ENCODE measurements at regions of chr1 and their contacts with region 1.

Region 1: GRCh38 chr1:18408656-18409370 is 71.9 kb upstream of the KLHDC7A start:
- DNase-seq: no peak
- ATAC-seq: no peak
- H3K4me3 ChIP-seq: no peak overlapping the region
- H3K27ac ChIP-seq: no peak overlapping the region
- H3K4me1 ChIP-seq: no peaks in the 10 kb centered on the region
- H3K27me3 ChIP-seq: peaks cover 0 to 5% of the 10 kb centered on the region in 2 experiments; a peak in 1 of 5 replicates
- CTCF ChIP-seq: no peak
- EP300 ChIP-seq: no peak
- POLR2A ChIP-seq: no peak
- RAD21 ChIP-seq: no peak

Region 2: DNA sequence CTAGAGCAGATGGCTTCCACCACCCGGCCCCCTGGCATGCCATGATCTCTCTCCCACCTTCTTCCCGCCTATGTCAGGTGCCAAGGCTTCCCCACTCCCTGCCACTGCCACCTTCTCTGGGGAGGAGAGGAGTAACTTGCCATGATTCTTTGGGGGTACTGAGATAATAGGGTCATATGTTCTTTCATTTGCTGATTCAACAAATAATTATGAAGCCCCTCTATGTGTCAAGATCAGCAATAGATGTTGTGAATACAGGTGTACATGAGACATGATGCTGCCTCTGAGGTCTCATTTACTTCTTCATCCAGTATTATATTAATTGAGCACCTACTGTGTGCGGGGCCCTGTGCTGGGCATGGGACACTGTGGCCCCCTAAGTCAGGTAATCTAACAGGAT is 1875.8 kb after region 1 on chr1:
- CTCF ChIA-PET with region 1: no interaction called
- POLR2A ChIA-PET with region 1: no interaction called
- in situ Hi-C with region 1: no loop called
- intact Hi-C with region 1: loop called (anchors 5 kb)
- DNase-seq: no peak
- ATAC-seq: no peak
- H3K4me3 ChIP-seq: no peak overlapping the region
- H3K27ac ChIP-seq: no peak overlapping the region
- H3K4me1 ChIP-seq: no peaks in the 10 kb centered on the region
- H3K27me3 ChIP-seq: peaks cover 2 to 17% of the 10 kb centered on the region in 2 experiments; a peak in 4 of 5 replicates
- CTCF ChIP-seq: no peak
- EP300 ChIP-seq: no peak
- POLR2A ChIP-seq: no peak
- RAD21 ChIP-seq: no peak